ENCODE measurements at regions of chr14 and their contacts with region 1.

Region 1: GRCh38 chr14:22556990-22557623 is 31.9 kb downstream of the DAD1 start:
- DNase-seq: peak; percentile 87 to 96 (median 91)
- H3K4me3 ChIP-seq: peak overlapping the region; percentile 80 to 85
- H3K4me3 Mint-ChIP-seq: peak overlapping the region; percentile 77 to 96 (median 88)
- H3K27ac ChIP-seq: peak overlapping the region; percentile 97
- H3K27ac Mint-ChIP-seq: peak overlapping the region; percentile 98 to 100 (median 100)
- H3K4me1 ChIP-seq: peaks cover 97% of the 10 kb centered on the region
- H3K4me1 Mint-ChIP-seq: peaks cover 75 to 97% (median 86%) of the 10 kb centered on the region in 4 donors
- H3K27me3 ChIP-seq: no peaks in the 10 kb centered on the region
- H3K27me3 Mint-ChIP-seq: peaks cover 2 to 4% of the 10 kb centered on the region in 2 donors

Region 2: GRCh38 chr14:21734457-21735074 is 822.5 kb before region 1 on chr14:
- CTCF ChIA-PET with region 1: no interaction called
- POLR2A ChIA-PET with region 1: interaction called, 26 read pairs
- intact Hi-C with region 1: no loop called
- DNase-seq: peak; percentile 54 to 63 (median 63)
- H3K4me3 ChIP-seq: no peak overlapping the region
- H3K4me3 Mint-ChIP-seq: peak overlapping the region in 7 of 8 donors; percentile 12 to 73 (median 47)
- H3K27ac ChIP-seq: no peak overlapping the region
- H3K27ac Mint-ChIP-seq: peak overlapping the region in 3 of 7 donors; percentile 4 to 77 (median 57)
- H3K4me1 ChIP-seq: no peaks in the 10 kb centered on the region
- H3K4me1 Mint-ChIP-seq: peaks cover 7 to 13% (median 10%) of the 10 kb centered on the region in 4 donors
- H3K27me3 ChIP-seq: no peaks in the 10 kb centered on the region
- H3K27me3 Mint-ChIP-seq: peaks cover 36 to 38% of the 10 kb centered on the region in 2 donors

Region 3: GRCh38 chr14:21882226-21882625 is 674.9 kb before region 1 on chr14:
- CTCF ChIA-PET with region 1: interaction called, 10 read pairs
- POLR2A ChIA-PET with region 1: no interaction called
- intact Hi-C with region 1: no loop called
- DNase-seq: no peak
- H3K4me3 ChIP-seq: no peak overlapping the region
- H3K4me3 Mint-ChIP-seq: peak overlapping the region in 1 of 8 donors; percentile 43
- H3K27ac ChIP-seq: no peak overlapping the region
- H3K27ac Mint-ChIP-seq: no peak overlapping the region
- H3K4me1 ChIP-seq: peaks cover 2% of the 10 kb centered on the region
- H3K4me1 Mint-ChIP-seq: peaks cover 4 to 22% (median 8%) of the 10 kb centered on the region in 4 donors
- H3K27me3 ChIP-seq: no peaks in the 10 kb centered on the region
- H3K27me3 Mint-ChIP-seq: no peaks in the 10 kb centered on the region

Region 4: GRCh38 chr14:22039938-22040775 is 517.0 kb before region 1 on chr14:
- CTCF ChIA-PET with region 1: interaction called, 5 read pairs
- POLR2A ChIA-PET with region 1: interaction called, 5 read pairs
- intact Hi-C with region 1: loop called (anchors 1 kb)
- DNase-seq: peak; percentile 38 to 56 (median 44)
- H3K4me3 ChIP-seq: peak overlapping the region in 1 of 2 donors; percentile 14
- H3K4me3 Mint-ChIP-seq: peak overlapping the region; percentile 40 to 82 (median 78)
- H3K27ac ChIP-seq: no peak overlapping the region
- H3K27ac Mint-ChIP-seq: peak overlapping the region; percentile 30 to 92 (median 80)
- H3K4me1 ChIP-seq: no peaks in the 10 kb centered on the region
- H3K4me1 Mint-ChIP-seq: peaks cover 2 to 11% (median 4%) of the 10 kb centered on the region in 4 donors
- H3K27me3 ChIP-seq: no peaks in the 10 kb centered on the region
- H3K27me3 Mint-ChIP-seq: no peaks in the 10 kb centered on the region

Region 5: DNA sequence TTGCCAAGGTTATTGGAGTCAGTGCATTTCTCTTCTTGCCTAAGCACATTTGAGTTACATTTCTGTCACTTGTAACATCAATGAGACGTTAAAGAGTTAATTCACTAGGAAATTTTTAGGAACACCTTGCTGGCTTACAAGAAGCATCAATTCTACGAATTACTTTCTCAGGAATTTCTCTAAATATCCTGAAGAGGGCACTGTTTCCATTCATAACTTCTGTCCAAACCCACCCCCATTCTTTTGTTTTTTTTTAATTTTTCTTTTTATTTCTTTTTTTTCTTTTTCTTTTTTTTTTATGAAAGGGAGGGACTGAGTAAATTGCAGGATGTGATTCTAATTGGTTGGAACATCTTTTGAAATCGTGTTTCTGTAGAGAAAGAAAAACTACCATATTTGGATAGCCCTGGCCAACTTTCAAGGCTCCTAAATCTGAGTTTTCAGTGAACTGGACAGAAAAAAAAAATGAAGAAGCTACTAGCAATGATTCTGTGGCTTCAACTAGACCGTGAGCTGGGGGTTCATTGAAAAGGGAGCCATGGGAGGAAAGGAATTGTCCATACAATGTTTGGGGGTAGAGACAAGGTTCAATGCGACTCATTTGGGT is 253.4 kb before region 1 on chr14:
- CTCF ChIA-PET with region 1: interaction called, 3 read pairs
- POLR2A ChIA-PET with region 1: no interaction called
- intact Hi-C with region 1: loop called (anchors 5 kb)
- DNase-seq: no peak
- H3K4me3 ChIP-seq: no peak overlapping the region
- H3K4me3 Mint-ChIP-seq: peak overlapping the region; percentile 57 to 80 (median 66)
- H3K27ac ChIP-seq: no peak overlapping the region
- H3K27ac Mint-ChIP-seq: peak overlapping the region in 5 of 7 donors; percentile 10 to 68 (median 53)
- H3K4me1 ChIP-seq: no peaks in the 10 kb centered on the region
- H3K4me1 Mint-ChIP-seq: no peaks in the 10 kb centered on the region
- H3K27me3 ChIP-seq: no peaks in the 10 kb centered on the region
- H3K27me3 Mint-ChIP-seq: no peaks in the 10 kb centered on the region

Region 6: GRCh38 chr14:22589096-22589839 is 32.2 kb after region 1 on chr14 and contains the start of gene DAD1:
- CTCF ChIA-PET with region 1: interaction called, 32 read pairs
- POLR2A ChIA-PET with region 1: interaction called, 387 read pairs
- intact Hi-C with region 1: loop called (anchors 1 kb)
- DNase-seq: peak; percentile 100
- H3K4me3 ChIP-seq: peak within 1 kb of the TSS; percentile 85 to 87
- H3K4me3 Mint-ChIP-seq: peak within 1 kb of the TSS; percentile 92 to 100 (median 97)
- H3K27ac ChIP-seq: peak within 1 kb of the TSS; percentile 88
- H3K27ac Mint-ChIP-seq: peak within 1 kb of the TSS; percentile 99 to 100 (median 99)
- H3K4me1 ChIP-seq: peaks cover 50% of the 10 kb centered on the region
- H3K4me1 Mint-ChIP-seq: peaks cover 39 to 63% (median 51%) of the 10 kb centered on the region in 4 donors
- H3K27me3 ChIP-seq: no peaks in the 10 kb centered on the region
- H3K27me3 Mint-ChIP-seq: peaks cover 2% of the 10 kb centered on the region in 2 donors
- total RNA-seq, gene DAD1: 110 to 124 TPM

Region 7: GRCh38 chr14:22753586-22753985 is 196.5 kb after region 1 on chr14:
- CTCF ChIA-PET with region 1: no interaction called
- POLR2A ChIA-PET with region 1: no interaction called
- intact Hi-C with region 1: no loop called
- DNase-seq: no peak
- H3K4me3 ChIP-seq: no peak overlapping the region
- H3K4me3 Mint-ChIP-seq: no peak overlapping the region
- H3K27ac ChIP-seq: no peak overlapping the region
- H3K27ac Mint-ChIP-seq: no peak overlapping the region
- H3K4me1 ChIP-seq: no peaks in the 10 kb centered on the region
- H3K4me1 Mint-ChIP-seq: peaks cover 0 to 2% (median 0%) of the 10 kb centered on the region in 4 donors
- H3K27me3 ChIP-seq: no peaks in the 10 kb centered on the region
- H3K27me3 Mint-ChIP-seq: peaks cover 18 to 22% of the 10 kb centered on the region in 2 donors

Region 8: GRCh38 chr14:22986508-22987054 is 429.5 kb after region 1 on chr14:
- CTCF ChIA-PET with region 1: interaction called, 3 read pairs
- POLR2A ChIA-PET with region 1: interaction called, 7 read pairs
- intact Hi-C with region 1: loop called (anchors 1 kb)
- DNase-seq: peak; percentile 80 to 86 (median 81)
- H3K4me3 ChIP-seq: no peak overlapping the region
- H3K4me3 Mint-ChIP-seq: no peak overlapping the region
- H3K27ac ChIP-seq: no peak overlapping the region
- H3K27ac Mint-ChIP-seq: peak overlapping the region in 1 of 7 donors; percentile 41
- H3K4me1 ChIP-seq: peaks cover 8% of the 10 kb centered on the region
- H3K4me1 Mint-ChIP-seq: peaks cover 0 to 4% (median 0%) of the 10 kb centered on the region in 4 donors
- H3K27me3 ChIP-seq: no peaks in the 10 kb centered on the region
- H3K27me3 Mint-ChIP-seq: no peaks in the 10 kb centered on the region

Measured in CD4-positive, alpha-beta memory T cell (primary cell).